SK-N-SH (cell line): ENCODE measurements at regions of chr9 and their contacts with region 1.

Region 1: GRCh38 chr9:21709464-21710058 is 92.9 kb upstream of the MTAP start:
- DNase-seq: peak; percentile 24
- H3K4me3 ChIP-seq: no peak overlapping the region
- H3K27ac ChIP-seq: no peak overlapping the region
- H3K4me1 ChIP-seq: no peaks in the 10 kb centered on the region
- H3K27me3 ChIP-seq: peaks cover 22% of the 10 kb centered on the region; the same call in 1 of the 2 replicates
- CTCF ChIP-seq: peak; percentile 85
- EP300 ChIP-seq: no peak
- RAD21 ChIP-seq: peak; percentile 52

Region 2: GRCh38 chr9:21605489-21605931 is 104.1 kb before region 1 on chr9:
- CTCF ChIA-PET with region 1: no interaction called
- POLR2A ChIA-PET with region 1: no interaction called
- DNase-seq: no peak
- H3K4me3 ChIP-seq: no peak overlapping the region
- H3K27ac ChIP-seq: no peak overlapping the region
- H3K4me1 ChIP-seq: no peaks in the 10 kb centered on the region
- H3K27me3 ChIP-seq: peaks cover 43% of the 10 kb centered on the region; the same call in 1 of the 2 replicates
- CTCF ChIP-seq: no peak
- EP300 ChIP-seq: no peak
- RAD21 ChIP-seq: no peak

Region 3: DNA sequence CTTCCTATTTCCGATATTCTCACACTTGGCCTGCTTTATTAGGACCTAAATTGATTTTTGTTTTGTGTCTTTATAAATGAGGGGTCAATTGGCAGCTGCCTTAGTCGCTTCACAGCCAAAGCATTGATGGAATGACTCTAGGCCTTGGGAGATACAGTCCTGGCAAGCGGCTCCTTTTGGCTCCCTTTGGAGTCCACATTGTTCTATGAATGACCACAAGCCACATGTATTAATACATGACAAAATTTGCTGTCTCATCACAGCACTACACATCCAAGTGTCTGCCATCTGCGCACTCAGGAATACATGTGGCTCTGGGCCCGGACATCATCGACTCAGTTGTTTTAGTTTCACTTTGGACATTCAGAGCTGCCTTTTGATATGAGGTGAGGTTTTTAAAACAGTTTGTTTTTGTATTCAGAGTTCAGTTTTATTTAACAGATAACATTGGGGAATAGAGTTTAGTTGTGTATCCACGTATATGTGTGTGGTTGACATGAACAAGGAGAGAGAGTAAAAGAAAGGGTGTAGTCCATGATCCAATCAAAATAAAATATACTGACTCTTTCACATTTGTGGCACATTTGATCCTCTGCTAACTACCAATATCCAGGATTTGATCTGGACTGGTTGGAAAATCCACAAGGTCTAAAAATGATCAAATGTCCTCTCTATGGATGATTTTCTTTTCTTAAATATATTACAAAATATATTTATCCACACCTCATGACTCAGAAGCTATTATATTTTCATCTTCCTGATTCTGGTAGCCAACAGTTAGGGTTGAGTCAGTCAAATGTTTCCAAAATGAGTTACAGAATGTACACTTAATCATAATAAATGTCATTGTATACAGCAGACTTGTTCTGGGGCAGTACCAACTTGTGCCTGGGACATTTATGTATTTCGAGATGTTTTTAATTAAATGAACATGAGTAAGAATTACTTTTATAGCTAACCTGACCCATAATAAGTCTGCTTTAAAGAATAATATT is 21.2 kb before region 1 on chr9:
- CTCF ChIA-PET with region 1: interaction called, 13 read pairs
- POLR2A ChIA-PET with region 1: no interaction called
- DNase-seq: no peak
- H3K4me3 ChIP-seq: peak overlapping the region; percentile 10 to 42; a peak in 3 of 4 replicates
- H3K27ac ChIP-seq: peak overlapping the region in 1 of 2 experiments; percentile 56; a peak in 2 of 4 replicates
- H3K4me1 ChIP-seq: peaks cover 0 to 12% of the 10 kb centered on the region in 2 experiments; a peak in 2 of 4 replicates
- H3K27me3 ChIP-seq: peaks cover 5% of the 10 kb centered on the region
- CTCF ChIP-seq: no peak
- EP300 ChIP-seq: no peak
- RAD21 ChIP-seq: no peak

Region 4: GRCh38 chr9:21696411-21696873 is 13.1 kb before region 1 on chr9:
- CTCF ChIA-PET with region 1: interaction called, 10 read pairs
- POLR2A ChIA-PET with region 1: no interaction called
- DNase-seq: peak; percentile 18
- H3K4me3 ChIP-seq: no peak overlapping the region
- H3K27ac ChIP-seq: no peak overlapping the region
- H3K4me1 ChIP-seq: no peaks in the 10 kb centered on the region
- H3K27me3 ChIP-seq: peaks cover 20% of the 10 kb centered on the region
- CTCF ChIP-seq: 0 out of 2 replicates have a peak, but pooled peaks have one; percentile 5
- EP300 ChIP-seq: no peak
- RAD21 ChIP-seq: no peak

Region 5: DNA sequence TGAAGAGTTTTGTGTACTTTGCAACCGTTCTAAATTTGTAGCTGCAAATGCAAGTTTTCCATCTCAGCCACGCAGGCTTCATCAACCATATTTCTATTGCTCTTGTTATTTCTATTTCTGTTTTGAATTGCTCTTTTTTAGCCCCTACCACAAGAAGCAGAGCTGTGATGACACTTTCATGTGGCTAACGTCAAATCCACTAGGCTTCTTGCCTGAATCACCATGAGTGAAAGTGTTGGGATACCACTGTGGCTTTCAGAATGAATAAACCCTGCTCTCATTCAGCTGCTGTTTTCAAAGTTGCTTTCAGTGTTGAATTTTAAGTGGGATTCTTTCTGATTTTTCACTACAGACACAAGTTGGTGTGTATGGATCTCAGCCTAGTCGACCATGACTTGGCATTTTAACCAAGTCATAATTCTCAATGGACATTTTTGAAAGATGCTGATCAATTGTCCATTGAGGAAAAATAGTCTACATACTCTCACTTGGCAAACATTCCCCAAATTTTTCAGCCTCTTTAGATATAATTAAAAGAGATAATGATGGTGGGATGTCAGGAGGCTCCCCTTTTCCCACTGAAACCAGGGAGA is 51.8 kb after region 1 on chr9:
- CTCF ChIA-PET with region 1: no interaction called
- POLR2A ChIA-PET with region 1: no interaction called
- DNase-seq: no peak
- H3K4me3 ChIP-seq: no peak overlapping the region
- H3K27ac ChIP-seq: no peak overlapping the region
- H3K4me1 ChIP-seq: no peaks in the 10 kb centered on the region
- H3K27me3 ChIP-seq: peaks cover 10% of the 10 kb centered on the region; the same call in 1 of the 2 replicates
- CTCF ChIP-seq: no peak
- EP300 ChIP-seq: no peak
- RAD21 ChIP-seq: no peak